Esophagus muscularis mucosa (tissue), 4 donors: ENCODE measurements at regions of chr18 and their contacts with region 1.

Region 1: GRCh38 chr18:62714671-62715435 is 488 bp upstream of the PHLPP1 start:
- DNase-seq: peak; percentile 100
- H3K4me3 ChIP-seq: peak overlapping the region; percentile 73 to 88 (median 84)
- H3K27ac ChIP-seq: peak overlapping the region; percentile 94 to 98 (median 96)
- H3K4me1 ChIP-seq: peaks cover 7 to 43% (median 34%) of the 10 kb centered on the region in 4 donors
- H3K27me3 ChIP-seq: no peaks in the 10 kb centered on the region
- CTCF ChIP-seq: peak; percentile 83 to 90 (median 88)
- EP300 ChIP-seq: no peak
- POLR2A ChIP-seq: no peak

Region 2: GRCh38 chr18:62522504-62523254 is 192.2 kb before region 1 on chr18 and contains the start of gene ZCCHC2:
- intact Hi-C with region 1: loop called (anchors 10 kb)
- DNase-seq: peak; percentile 99
- H3K4me3 ChIP-seq: peak within 1 kb of the TSS; percentile 91 to 96 (median 94)
- H3K27ac ChIP-seq: peak within 1 kb of the TSS; percentile 95 to 99 (median 98)
- H3K4me1 ChIP-seq: peaks cover 22 to 39% (median 30%) of the 10 kb centered on the region in 4 donors
- H3K27me3 ChIP-seq: no peaks in the 10 kb centered on the region
- CTCF ChIP-seq: no peak
- EP300 ChIP-seq: no peak
- POLR2A ChIP-seq: peak; percentile 73
- total RNA-seq, gene ZCCHC2: 18.9 to 26.1 (median 23.8) TPM

Region 3: GRCh38 chr18:62584241-62585120 is 130.4 kb before region 1 on chr18:
- intact Hi-C with region 1: loop called (anchors 10 kb)
- DNase-seq: peak; percentile 97
- H3K4me3 ChIP-seq: peak overlapping the region in 2 of 4 donors; percentile 5 to 10
- H3K27ac ChIP-seq: peak overlapping the region; percentile 8 to 61 (median 50)
- H3K4me1 ChIP-seq: peaks cover 16 to 25% (median 23%) of the 10 kb centered on the region in 4 donors
- H3K27me3 ChIP-seq: no peaks in the 10 kb centered on the region
- CTCF ChIP-seq: peak; percentile 97 to 99 (median 97)
- EP300 ChIP-seq: no peak
- POLR2A ChIP-seq: no peak

Region 4: GRCh38 chr18:62784966-62785413 is 70.1 kb after region 1 on chr18:
- intact Hi-C with region 1: loop called (anchors 5 kb)
- DNase-seq: no peak
- H3K4me3 ChIP-seq: peak overlapping the region in 1 of 4 donors; percentile 5
- H3K27ac ChIP-seq: peak overlapping the region; percentile 52 to 64 (median 58)
- H3K4me1 ChIP-seq: peaks cover 3 to 82% (median 61%) of the 10 kb centered on the region in 4 donors
- H3K27me3 ChIP-seq: no peaks in the 10 kb centered on the region
- CTCF ChIP-seq: no peak
- EP300 ChIP-seq: no peak
- POLR2A ChIP-seq: no peak

Region 5: DNA sequence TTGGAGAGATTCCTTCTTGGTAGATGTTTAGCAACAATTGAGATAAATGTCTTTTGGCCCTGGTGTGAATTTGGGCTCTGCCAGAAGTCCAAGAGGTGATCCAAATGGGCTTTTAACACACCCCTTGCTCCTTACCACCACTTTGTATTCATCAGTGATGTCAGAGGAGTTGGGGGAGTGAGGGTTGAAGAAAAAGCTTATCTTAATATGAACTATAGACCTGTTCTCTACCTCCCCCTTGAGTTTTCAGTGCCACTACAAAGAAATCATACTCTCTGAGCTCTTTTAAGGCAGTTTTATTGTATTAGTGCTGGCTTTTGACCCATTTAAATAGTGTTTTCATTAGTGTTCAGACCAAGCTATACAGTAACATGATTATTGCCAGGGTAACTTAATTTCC is 229.6 kb after region 1 on chr18:
- intact Hi-C with region 1: loop called (anchors 5 kb)
- DNase-seq: no peak
- H3K4me3 ChIP-seq: no peak overlapping the region
- H3K27ac ChIP-seq: no peak overlapping the region
- H3K4me1 ChIP-seq: peaks cover 6 to 16% (median 14%) of the 10 kb centered on the region in 4 donors
- H3K27me3 ChIP-seq: no peaks in the 10 kb centered on the region
- CTCF ChIP-seq: peak in 2 of 3 experiments; percentile 7 to 11
- EP300 ChIP-seq: no peak
- POLR2A ChIP-seq: no peak

Region 6: GRCh38 chr18:62957885-62958472 is 243.1 kb after region 1 on chr18:
- intact Hi-C with region 1: loop called (anchors 5 kb)
- DNase-seq: no peak
- H3K4me3 ChIP-seq: no peak overlapping the region
- H3K27ac ChIP-seq: no peak overlapping the region
- H3K4me1 ChIP-seq: peaks cover 0 to 6% (median 3%) of the 10 kb centered on the region in 4 donors
- H3K27me3 ChIP-seq: no peaks in the 10 kb centered on the region
- CTCF ChIP-seq: peak; percentile 33 to 49 (median 40)
- EP300 ChIP-seq: no peak
- POLR2A ChIP-seq: no peak

Region 7: DNA sequence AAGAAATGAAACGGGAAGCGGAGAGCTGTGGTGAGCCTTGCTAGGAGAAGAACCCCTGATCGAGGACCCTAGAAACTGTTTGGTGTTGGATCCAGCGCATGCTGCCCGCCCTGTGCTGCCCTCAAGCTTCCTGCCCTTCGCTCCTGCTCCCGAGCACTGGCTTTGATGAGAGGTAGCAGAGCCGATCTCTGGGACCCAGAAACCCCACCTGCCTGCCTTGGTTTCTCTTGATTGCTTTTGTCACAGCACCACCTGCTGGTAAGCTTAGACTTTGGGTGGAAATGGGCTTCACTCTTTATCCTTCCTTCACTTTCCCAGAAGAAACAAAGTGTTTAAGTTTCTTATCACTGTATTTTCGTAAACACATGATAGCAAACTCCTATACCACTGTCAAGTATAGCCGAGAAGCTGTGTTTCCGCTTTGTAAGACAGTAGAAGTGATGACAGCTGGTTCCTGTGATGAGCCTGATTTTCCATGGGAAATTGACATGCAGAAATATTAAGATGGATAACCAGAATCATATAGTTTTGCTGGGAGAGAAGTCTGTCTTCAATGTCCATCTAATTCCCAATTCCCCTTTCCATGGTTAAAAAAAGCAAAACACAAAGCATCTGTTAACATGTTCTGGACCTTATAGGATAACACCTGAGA is 267.9 kb after region 1 on chr18:
- intact Hi-C with region 1: loop called (anchors 2 kb)
- DNase-seq: no peak
- H3K4me3 ChIP-seq: peak overlapping the region; percentile 42 to 53 (median 44)
- H3K27ac ChIP-seq: no peak overlapping the region
- H3K4me1 ChIP-seq: peaks cover 6 to 10% (median 8%) of the 10 kb centered on the region in 4 donors
- H3K27me3 ChIP-seq: no peaks in the 10 kb centered on the region
- CTCF ChIP-seq: peak; percentile 72 to 76 (median 73)
- EP300 ChIP-seq: no peak
- POLR2A ChIP-seq: no peak